Gastrocnemius medialis (tissue), 4 donors: ENCODE measurements at regions of chr7 and their contacts with region 1.

Region 1: GRCh38 chr7:136009488-136010079 is 32.4 kb upstream of the MTPN start:
- DNase-seq: no peak
- ATAC-seq: peak in 1 of 2 donors; percentile 68
- H3K4me3 ChIP-seq: no peak overlapping the region
- H3K27ac ChIP-seq: no peak overlapping the region
- H3K4me1 ChIP-seq: peaks cover 0 to 5% of the 10 kb centered on the region in 2 donors
- H3K27me3 ChIP-seq: no peaks in the 10 kb centered on the region
- CTCF ChIP-seq: peak; percentile 72 to 92 (median 80)
- POLR2A ChIP-seq: no peak

Region 2: GRCh38 chr7:135281363-135281949 is 728.1 kb before region 1 on chr7:
- in situ Hi-C with region 1: loop called in 1 of 4 experiments (anchors 25 kb)
- intact Hi-C with region 1: no loop called
- DNase-seq: peak; percentile 68 to 73
- ATAC-seq: peak; percentile 86 to 96
- H3K4me3 ChIP-seq: no peak overlapping the region
- H3K27ac ChIP-seq: no peak overlapping the region
- H3K4me1 ChIP-seq: peaks cover 19 to 33% of the 10 kb centered on the region in 2 donors
- H3K27me3 ChIP-seq: no peaks in the 10 kb centered on the region
- CTCF ChIP-seq: peak; percentile 88 to 98 (median 89)
- POLR2A ChIP-seq: no peak

Region 3: DNA sequence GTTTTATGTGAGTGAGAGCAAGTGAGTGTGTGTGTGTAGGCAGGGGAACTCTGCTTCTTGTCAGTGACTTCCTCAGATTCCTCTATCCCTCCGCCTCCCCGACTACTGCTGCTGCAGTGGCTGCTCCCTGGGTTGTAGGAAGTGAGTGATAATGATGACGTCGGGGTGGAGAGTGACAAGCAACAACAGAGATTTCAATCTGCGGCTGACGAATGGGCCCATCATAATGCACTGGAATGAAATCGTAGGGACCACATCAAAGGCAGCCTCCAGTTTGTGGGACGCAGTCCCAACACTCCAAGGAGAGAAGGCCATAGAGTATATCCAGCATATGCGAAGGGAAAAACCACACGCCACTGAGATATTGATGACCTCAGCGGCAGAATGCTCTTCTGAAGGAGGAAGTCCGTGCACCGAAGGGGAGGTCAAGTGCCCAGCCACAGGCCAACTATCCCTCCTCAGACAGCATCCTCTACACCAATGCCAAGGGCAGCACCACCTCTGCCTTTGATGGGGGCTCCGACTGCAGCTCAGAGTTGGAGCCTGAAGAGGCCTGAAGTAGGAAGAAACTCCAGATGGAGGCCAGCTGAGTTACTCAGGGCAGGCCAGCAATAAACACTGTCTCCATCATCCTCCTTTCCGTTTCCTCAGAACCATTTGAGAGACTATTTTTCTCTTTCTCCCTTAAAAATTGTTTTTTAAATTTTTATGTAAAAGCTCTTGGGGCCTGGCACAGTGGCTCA is 358.6 kb before region 1 on chr7:
- in situ Hi-C with region 1: loop called in 2 of 4 experiments (anchors 10 to 25 kb)
- intact Hi-C with region 1: no loop called
- DNase-seq: no peak
- ATAC-seq: no peak
- H3K4me3 ChIP-seq: no peak overlapping the region
- H3K27ac ChIP-seq: no peak overlapping the region
- H3K4me1 ChIP-seq: no peaks in the 10 kb centered on the region
- H3K27me3 ChIP-seq: no peaks in the 10 kb centered on the region
- CTCF ChIP-seq: no peak
- POLR2A ChIP-seq: no peak

Region 4: GRCh38 chr7:135662373-135663114 is 347.0 kb before region 1 on chr7 and contains the start of gene STMP1:
- in situ Hi-C with region 1: loop called in 2 of 4 experiments (anchors 10 to 25 kb)
- intact Hi-C with region 1: loop called (anchors 5 kb)
- DNase-seq: peak; percentile 93 to 95
- ATAC-seq: peak; percentile 93 to 94
- H3K4me3 ChIP-seq: peak within 1 kb of the TSS; percentile 81 to 100 (median 90)
- H3K27ac ChIP-seq: peak within 1 kb of the TSS; percentile 91 to 99 (median 94)
- H3K4me1 ChIP-seq: peaks cover 35 to 47% of the 10 kb centered on the region in 2 donors
- H3K27me3 ChIP-seq: no peaks in the 10 kb centered on the region
- CTCF ChIP-seq: peak in 2 of 5 experiments; percentile 87 to 91
- POLR2A ChIP-seq: peak; percentile 90 to 93
- total RNA-seq, gene STMP1: 7.7 to 19.9 (median 11.8) TPM

Region 5: GRCh38 chr7:135672560-135673359 is 336.8 kb before region 1 on chr7:
- in situ Hi-C with region 1: loop called in 3 of 4 experiments (anchors 10 to 25 kb)
- intact Hi-C with region 1: no loop called
- DNase-seq: no peak
- ATAC-seq: peak; percentile 68 to 71
- H3K4me3 ChIP-seq: no peak overlapping the region
- H3K27ac ChIP-seq: peak overlapping the region; percentile 47 to 62 (median 55)
- H3K4me1 ChIP-seq: peaks cover 61 to 80% of the 10 kb centered on the region in 2 donors
- H3K27me3 ChIP-seq: no peaks in the 10 kb centered on the region
- CTCF ChIP-seq: peak; percentile 65 to 83 (median 75)
- POLR2A ChIP-seq: no peak

Region 6: DNA sequence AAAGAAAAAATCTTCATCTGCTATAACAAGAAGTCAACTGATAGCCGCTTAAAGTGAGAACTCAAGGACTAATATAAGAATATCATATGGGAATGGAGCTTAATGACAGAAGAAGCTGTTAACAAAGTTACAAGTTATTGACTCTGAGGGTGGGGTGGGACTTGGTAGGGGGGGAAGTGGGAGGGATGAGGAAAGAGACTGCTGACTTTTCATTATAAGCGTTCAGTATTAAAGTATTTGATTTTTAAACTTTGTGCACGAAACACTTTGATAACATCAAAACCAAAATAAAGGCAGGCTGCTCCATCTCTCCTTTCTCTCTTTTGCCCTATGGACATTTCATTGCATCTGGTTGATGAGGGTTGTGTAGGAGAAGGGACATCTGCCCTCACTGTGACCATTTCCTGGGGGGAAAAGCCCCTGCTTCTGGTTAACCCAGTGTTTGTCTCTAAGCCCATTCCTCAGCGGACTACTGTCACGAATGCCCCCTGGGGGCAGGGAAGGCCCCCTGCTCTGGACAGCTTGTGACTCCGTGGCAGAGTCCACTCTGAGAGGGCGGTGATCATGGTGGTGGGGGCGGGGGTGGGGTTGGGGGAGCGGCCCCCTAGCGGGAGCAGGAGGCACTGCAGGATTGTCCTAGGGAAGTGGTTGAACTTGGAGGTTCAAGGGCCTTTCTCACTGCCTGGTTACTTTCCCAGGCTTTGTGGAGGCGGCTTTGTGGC is 299.0 kb before region 1 on chr7:
- in situ Hi-C with region 1: no loop called
- intact Hi-C with region 1: no loop called
- DNase-seq: no peak
- ATAC-seq: no peak
- H3K4me3 ChIP-seq: no peak overlapping the region
- H3K27ac ChIP-seq: no peak overlapping the region
- H3K4me1 ChIP-seq: peaks cover 0 to 4% of the 10 kb centered on the region in 2 donors
- H3K27me3 ChIP-seq: no peaks in the 10 kb centered on the region
- CTCF ChIP-seq: peak in 2 of 5 experiments; percentile 53 to 74
- POLR2A ChIP-seq: no peak

Region 7: GRCh38 chr7:135801045-135801693 is 208.4 kb before region 1 on chr7:
- in situ Hi-C with region 1: loop called (anchors 5 kb)
- intact Hi-C with region 1: loop called (anchors 1 kb)
- DNase-seq: no peak
- ATAC-seq: peak; percentile 69 to 87
- H3K4me3 ChIP-seq: peak overlapping the region in 2 of 4 donors; percentile 1 to 18
- H3K27ac ChIP-seq: no peak overlapping the region
- H3K4me1 ChIP-seq: peaks cover 0 to 4% of the 10 kb centered on the region in 2 donors
- H3K27me3 ChIP-seq: no peaks in the 10 kb centered on the region
- CTCF ChIP-seq: peak; percentile 82 to 87 (median 85)
- POLR2A ChIP-seq: no peak